ENCODE measurements at regions of chr7 and their contacts with region 1.

Region 1: GRCh38 chr7:134986363-134987251 is at the start of gene AGBL3:
- DNase-seq: peak; percentile 94
- ATAC-seq: peak; percentile 95
- H3K4me3 Mint-ChIP-seq: peak within 1 kb of the TSS; percentile 89
- H3K27ac Mint-ChIP-seq: peak within 1 kb of the TSS; percentile 92
- H3K4me1 Mint-ChIP-seq: peaks cover 35% of the 10 kb centered on the region
- H3K27me3 Mint-ChIP-seq: no peaks in the 10 kb centered on the region
- total RNA-seq, gene AGBL3: 2.2 to 3.6 TPM

Region 2: DNA sequence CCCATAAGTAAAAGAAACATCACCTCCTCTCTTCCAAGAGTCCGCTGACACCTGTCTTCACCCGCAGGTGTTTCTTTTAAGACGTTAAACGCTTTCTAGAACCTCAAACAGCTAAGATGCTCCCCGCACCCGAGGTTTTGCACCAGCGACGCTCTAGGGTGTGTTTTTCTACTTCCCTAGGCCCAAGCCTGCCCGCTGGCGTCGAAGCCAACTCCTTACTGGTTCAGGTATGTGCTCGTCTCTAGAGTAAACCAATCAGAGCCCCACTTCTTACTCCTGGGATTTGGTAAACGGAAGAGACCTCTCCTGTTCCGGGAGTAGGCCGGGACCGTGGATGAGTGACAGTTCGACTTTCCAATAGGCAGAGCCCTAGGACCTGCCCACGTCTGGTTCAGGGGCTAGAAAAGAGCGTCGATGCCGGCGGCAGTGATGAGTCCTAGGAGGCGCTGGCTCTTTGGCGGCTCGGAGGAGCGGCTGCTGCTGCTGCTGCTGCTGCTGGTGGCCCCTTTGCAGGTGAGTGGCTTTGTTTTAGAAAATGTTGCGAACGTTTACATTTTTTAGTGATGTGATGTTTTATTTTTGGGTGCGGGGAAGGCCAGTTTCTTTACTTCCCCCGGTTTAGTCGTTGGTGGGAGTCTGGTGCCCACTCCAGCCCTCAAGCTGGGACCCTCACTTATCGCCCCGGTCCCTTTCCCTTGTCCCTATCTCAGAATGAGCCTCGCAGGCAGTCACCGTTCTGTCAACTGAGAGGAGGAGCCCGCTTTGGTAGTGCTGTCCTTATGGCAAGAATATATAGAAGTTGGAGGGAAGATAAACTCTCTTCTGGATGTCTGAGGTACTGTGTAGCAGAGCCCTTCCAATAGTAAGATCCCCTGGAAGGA is 339.9 kb before region 1 on chr7 and contains the start of gene BPGM:
- CTCF ChIA-PET with region 1: interaction called, 12 read pairs
- POLR2A ChIA-PET with region 1: no interaction called
- DNase-seq: peak; percentile 98
- ATAC-seq: peak; percentile 99
- H3K4me3 Mint-ChIP-seq: no peak within 1 kb of the TSS
- H3K27ac Mint-ChIP-seq: no peak within 1 kb of the TSS
- H3K4me1 Mint-ChIP-seq: peaks cover 16% of the 10 kb centered on the region
- H3K27me3 Mint-ChIP-seq: no peaks in the 10 kb centered on the region
- total RNA-seq, gene BPGM: 11.9 to 12.2 TPM

Region 3: GRCh38 chr7:134935701-134936100 is 50.9 kb before region 1 on chr7:
- CTCF ChIA-PET with region 1: no interaction called
- POLR2A ChIA-PET with region 1: no interaction called
- DNase-seq: no peak
- ATAC-seq: no peak
- H3K4me3 Mint-ChIP-seq: no peak overlapping the region
- H3K27ac Mint-ChIP-seq: no peak overlapping the region
- H3K4me1 Mint-ChIP-seq: peaks cover 11% of the 10 kb centered on the region
- H3K27me3 Mint-ChIP-seq: no peaks in the 10 kb centered on the region

Region 4: GRCh38 chr7:134962270-134962780 is 24.3 kb before region 1 on chr7:
- CTCF ChIA-PET with region 1: interaction called, 10 read pairs
- POLR2A ChIA-PET with region 1: interaction called, 4 read pairs
- DNase-seq: no peak
- ATAC-seq: no peak
- H3K4me3 Mint-ChIP-seq: no peak overlapping the region
- H3K27ac Mint-ChIP-seq: no peak overlapping the region
- H3K4me1 Mint-ChIP-seq: no peaks in the 10 kb centered on the region
- H3K27me3 Mint-ChIP-seq: peaks cover 4% of the 10 kb centered on the region

Region 5: DNA sequence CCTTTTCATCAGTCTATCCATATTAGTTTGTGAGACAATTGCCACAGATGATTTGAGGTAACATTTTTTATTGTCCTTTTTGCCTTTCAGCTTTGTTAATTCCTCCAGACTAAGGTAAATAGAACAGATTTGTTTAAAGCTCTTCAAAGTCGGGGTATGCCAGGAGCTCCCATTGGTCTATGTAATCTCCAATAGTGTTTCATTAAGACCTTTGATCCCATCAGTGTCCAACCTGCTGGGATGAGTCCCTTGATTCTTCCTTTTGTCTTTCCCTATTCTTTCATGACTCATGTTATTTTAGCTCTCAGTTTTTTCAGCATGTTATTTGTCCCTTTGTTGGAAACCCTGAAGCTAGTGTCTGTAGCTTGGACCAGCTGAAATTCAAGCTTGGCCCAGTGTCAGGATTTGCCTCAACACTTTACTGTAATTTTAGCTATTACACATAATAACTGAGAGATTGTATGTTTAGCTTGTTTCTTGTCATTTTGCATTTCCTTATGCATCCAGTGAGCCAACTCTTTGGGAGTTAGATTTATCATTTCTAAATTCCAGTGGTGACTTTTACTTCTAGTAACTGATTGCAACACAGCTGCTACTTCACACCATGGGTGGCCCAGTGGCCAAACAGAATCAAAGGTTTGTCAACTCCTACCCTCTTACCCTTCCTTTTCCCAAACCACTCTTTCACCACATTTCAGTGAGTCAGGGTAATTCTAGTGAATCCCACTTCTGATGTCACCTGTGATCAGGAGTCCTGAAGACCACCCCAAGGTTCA is 15.0 kb after region 1 on chr7:
- CTCF ChIA-PET with region 1: interaction called, 31 read pairs
- POLR2A ChIA-PET with region 1: interaction called, 30 read pairs
- DNase-seq: no peak
- ATAC-seq: no peak
- H3K4me3 Mint-ChIP-seq: no peak overlapping the region
- H3K27ac Mint-ChIP-seq: no peak overlapping the region
- H3K4me1 Mint-ChIP-seq: no peaks in the 10 kb centered on the region
- H3K27me3 Mint-ChIP-seq: no peaks in the 10 kb centered on the region

Region 6: DNA sequence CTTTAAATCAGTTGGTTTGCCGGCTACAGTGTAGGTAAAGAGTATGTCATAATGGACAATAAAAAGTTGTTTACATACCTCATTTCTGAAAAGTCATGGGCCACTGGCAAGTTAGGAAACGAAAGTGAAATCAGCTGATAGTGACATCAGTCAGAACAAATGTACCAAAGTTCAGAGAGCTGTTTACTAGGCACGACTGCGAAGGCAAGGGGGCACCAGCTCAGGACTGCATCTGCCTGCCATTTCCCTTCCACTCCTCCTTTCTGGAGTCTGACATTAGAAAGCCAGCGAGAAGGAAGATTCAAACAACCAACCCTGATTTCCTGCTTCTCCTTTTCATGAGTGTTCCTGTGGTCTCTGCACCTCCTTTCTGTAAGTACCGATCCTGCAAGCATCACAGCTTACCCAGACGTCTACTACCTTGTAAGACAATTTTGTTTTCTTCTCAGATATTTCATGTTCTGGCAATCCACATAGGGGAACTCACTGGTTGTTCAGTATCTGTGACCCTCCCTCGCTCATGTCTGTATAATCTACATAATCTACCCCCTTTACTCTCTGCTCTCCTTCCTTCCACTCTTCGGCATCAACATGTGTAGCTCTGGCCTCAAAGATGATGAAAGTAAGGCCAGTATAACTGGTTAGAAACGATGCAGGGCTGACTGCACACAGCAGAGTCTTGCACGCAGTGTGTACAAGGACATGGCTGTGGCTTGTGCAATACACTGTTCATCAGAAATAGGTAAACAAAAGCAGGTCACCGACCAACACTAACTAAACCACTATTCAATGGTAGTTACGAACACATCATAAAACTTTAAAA is 161.5 kb after region 1 on chr7 and contains the start of gene TMEM140:
- CTCF ChIA-PET with region 1: interaction called, 40 read pairs
- POLR2A ChIA-PET with region 1: interaction called, 27 read pairs
- DNase-seq: peak; percentile 77
- ATAC-seq: peak; percentile 84
- H3K4me3 Mint-ChIP-seq: peak within 1 kb of the TSS; percentile 84
- H3K27ac Mint-ChIP-seq: peak within 1 kb of the TSS; percentile 95
- H3K4me1 Mint-ChIP-seq: peaks cover 53% of the 10 kb centered on the region
- H3K27me3 Mint-ChIP-seq: no peaks in the 10 kb centered on the region
- total RNA-seq, gene TMEM140: 12.6 to 12.7 TPM

Region 7: GRCh38 chr7:135160098-135160857 is 173.7 kb after region 1 on chr7:
- CTCF ChIA-PET with region 1: interaction called, 17 read pairs
- POLR2A ChIA-PET with region 1: interaction called, 3 read pairs
- DNase-seq: no peak
- ATAC-seq: peak; percentile 18
- H3K4me3 Mint-ChIP-seq: no peak overlapping the region
- H3K27ac Mint-ChIP-seq: peak overlapping the region; percentile 53
- H3K4me1 Mint-ChIP-seq: peaks cover 29% of the 10 kb centered on the region
- H3K27me3 Mint-ChIP-seq: no peaks in the 10 kb centered on the region

Region 8: GRCh38 chr7:135170274-135170997 is 183.8 kb after region 1 on chr7 and contains the start of gene CYREN:
- CTCF ChIA-PET with region 1: interaction called, 66 read pairs
- POLR2A ChIA-PET with region 1: interaction called, 15 read pairs
- DNase-seq: peak; percentile 92
- ATAC-seq: peak; percentile 82
- H3K4me3 Mint-ChIP-seq: peak within 1 kb of the TSS; percentile 94
- H3K27ac Mint-ChIP-seq: peak within 1 kb of the TSS; percentile 94
- H3K4me1 Mint-ChIP-seq: peaks cover 50% of the 10 kb centered on the region
- H3K27me3 Mint-ChIP-seq: no peaks in the 10 kb centered on the region
- total RNA-seq, gene CYREN: 35.2 to 36.9 TPM

Measured in activated CD8-positive, alpha-beta T cell treated with anti-CD3 and anti-CD28 coated beads, Interleukin-2, amount 10 ng/mL, durations not matched to agents 7 days and 5 days (primary cell).